Dendritic cell treated with granulocyte-macrophage colony-stimulating factor and Interleukin-4, amounts not matched to agents 40 ng/mL and 50 ng/mL, for 4 days (primary cell): ENCODE measurements at regions of chr12 and their contacts with region 1.

Region 1: GRCh38 chr12:14239350-14239934 is 126.0 kb upstream of the ATF7IP start:
- H3K4me3 Mint-ChIP-seq: peak overlapping the region; percentile 72
- H3K27ac Mint-ChIP-seq: peak overlapping the region; percentile 92
- H3K4me1 Mint-ChIP-seq: peaks cover 28% of the 10 kb centered on the region
- H3K27me3 Mint-ChIP-seq: no peaks in the 10 kb centered on the region

Region 2: DNA sequence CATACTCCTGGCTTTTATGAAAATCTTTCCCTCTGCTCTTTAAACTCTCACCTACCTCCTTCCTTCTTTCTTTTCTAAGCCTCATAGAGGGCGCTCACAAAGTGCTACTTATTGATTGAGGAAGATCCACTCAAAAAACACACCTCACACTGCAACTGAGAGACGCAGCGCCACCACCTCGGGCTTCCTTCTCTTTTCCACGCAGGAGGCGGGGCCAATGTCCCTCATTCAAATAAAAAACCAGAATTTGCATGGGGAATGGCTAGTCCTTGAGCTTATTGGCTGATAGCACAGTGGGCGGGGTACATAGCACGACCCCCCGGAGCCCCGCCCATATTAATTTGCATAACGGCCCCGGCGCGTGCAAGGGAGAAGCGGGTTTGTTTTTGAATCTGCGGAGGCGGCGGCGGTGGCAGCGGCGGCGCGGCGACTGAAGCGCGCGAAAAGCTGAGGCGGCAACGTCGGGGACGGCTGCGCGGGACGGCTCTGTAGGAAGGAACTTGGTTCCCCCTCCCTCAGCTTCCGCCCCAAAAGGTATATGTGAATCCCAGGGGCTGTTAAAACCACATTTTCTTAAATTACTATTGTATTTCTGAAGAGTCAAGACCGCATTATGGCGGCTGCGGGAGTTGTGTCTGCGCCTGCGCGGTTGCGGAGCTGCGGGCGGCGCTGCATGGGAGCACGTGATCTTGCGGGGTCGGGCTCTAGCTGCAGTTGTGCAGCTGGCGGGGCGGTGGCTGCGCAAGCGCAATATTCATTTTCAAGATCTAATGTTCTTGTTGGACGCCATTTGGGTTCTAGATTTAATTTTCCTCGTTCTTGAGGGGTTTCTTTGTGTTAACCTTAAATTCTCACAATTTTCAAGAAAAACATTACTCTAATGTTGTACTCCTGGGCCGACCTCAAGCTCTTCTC is 126.1 kb after region 1 on chr12 and contains the start of gene ATF7IP:
- intact Hi-C with region 1: loop called (anchors 5 kb)
- H3K4me3 Mint-ChIP-seq: peak within 1 kb of the TSS; percentile 74
- H3K27ac Mint-ChIP-seq: peak within 1 kb of the TSS; percentile 84
- H3K4me1 Mint-ChIP-seq: peaks cover 6% of the 10 kb centered on the region
- H3K27me3 Mint-ChIP-seq: no peaks in the 10 kb centered on the region

Region 3: DNA sequence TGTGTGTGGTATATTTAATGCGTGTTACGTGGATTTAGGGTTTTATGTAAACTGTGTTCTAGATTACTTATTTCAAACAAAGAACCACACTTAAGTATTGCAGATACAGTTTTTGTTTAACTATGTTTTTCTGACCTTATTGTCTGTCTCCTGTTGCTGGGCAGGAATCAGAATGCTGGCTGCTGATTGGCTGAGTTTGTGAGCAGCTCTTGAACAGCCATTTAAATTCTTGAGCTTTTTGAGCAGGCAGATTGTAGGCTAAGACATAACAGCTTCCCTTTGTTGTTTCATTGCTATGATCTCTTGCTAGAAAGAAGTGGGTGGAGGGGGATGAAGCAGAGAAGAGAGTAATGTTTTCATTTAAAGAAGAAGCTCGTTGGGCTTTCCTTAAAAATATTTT is 178.3 kb after region 1 on chr12:
- intact Hi-C with region 1: loop called (anchors 2 kb)
- H3K4me3 Mint-ChIP-seq: no peak overlapping the region
- H3K27ac Mint-ChIP-seq: no peak overlapping the region
- H3K4me1 Mint-ChIP-seq: peaks cover 8% of the 10 kb centered on the region
- H3K27me3 Mint-ChIP-seq: no peaks in the 10 kb centered on the region

Region 4: GRCh38 chr12:14454098-14454907 is 214.9 kb after region 1 on chr12:
- intact Hi-C with region 1: loop called (anchors 2 kb)
- H3K4me3 Mint-ChIP-seq: no peak overlapping the region
- H3K27ac Mint-ChIP-seq: no peak overlapping the region
- H3K4me1 Mint-ChIP-seq: peaks cover 27% of the 10 kb centered on the region
- H3K27me3 Mint-ChIP-seq: no peaks in the 10 kb centered on the region

Region 5: DNA sequence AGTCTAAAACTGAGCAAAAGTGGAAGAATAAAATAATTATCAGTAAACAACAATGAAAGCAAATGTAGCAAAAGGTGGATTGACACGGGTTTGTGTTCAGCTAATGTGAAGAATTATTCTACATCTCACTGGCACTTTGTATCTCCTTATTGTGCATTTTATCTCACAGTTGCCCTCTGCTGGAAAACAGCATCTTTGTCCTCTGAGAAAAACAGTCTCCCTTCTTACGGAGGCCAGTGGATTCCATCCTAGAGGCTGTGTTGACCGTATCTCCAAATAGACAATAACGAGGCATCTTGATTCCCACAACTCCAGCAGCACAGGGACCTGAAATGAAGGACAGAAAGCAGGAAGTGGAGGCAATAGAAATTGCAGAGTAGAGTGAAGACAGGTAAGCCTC is 379.5 kb after region 1 on chr12:
- intact Hi-C with region 1: loop called (anchors 2 kb)
- H3K4me3 Mint-ChIP-seq: no peak overlapping the region
- H3K27ac Mint-ChIP-seq: no peak overlapping the region
- H3K4me1 Mint-ChIP-seq: peaks cover 34% of the 10 kb centered on the region
- H3K27me3 Mint-ChIP-seq: no peaks in the 10 kb centered on the region

Region 6: DNA sequence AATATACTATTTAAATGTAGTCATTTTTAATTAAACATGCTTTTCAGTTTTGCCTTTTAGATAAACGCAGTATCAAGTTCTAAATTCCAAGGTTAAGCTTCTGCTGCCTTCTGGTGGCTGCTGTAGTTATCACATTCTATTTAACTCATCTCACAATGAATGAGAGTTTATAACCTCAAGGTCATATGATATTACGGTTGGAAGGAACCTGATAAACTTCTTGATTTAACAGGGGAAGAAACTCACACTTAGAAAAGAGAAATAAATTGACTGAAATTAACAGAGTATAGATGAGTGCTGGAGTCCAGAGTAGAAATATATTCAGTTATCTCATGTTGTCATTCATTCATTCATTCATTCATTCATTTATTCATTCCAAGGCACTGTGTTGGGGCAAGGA is 425.1 kb after region 1 on chr12:
- intact Hi-C with region 1: loop called (anchors 2 kb)
- H3K4me3 Mint-ChIP-seq: no peak overlapping the region
- H3K27ac Mint-ChIP-seq: no peak overlapping the region
- H3K4me1 Mint-ChIP-seq: no peaks in the 10 kb centered on the region
- H3K27me3 Mint-ChIP-seq: peaks cover 4% of the 10 kb centered on the region

Region 7: GRCh38 chr12:14716848-14717444 is 477.5 kb after region 1 on chr12:
- intact Hi-C with region 1: loop called (anchors 2 kb)
- H3K4me3 Mint-ChIP-seq: no peak overlapping the region
- H3K27ac Mint-ChIP-seq: no peak overlapping the region
- H3K4me1 Mint-ChIP-seq: no peaks in the 10 kb centered on the region
- H3K27me3 Mint-ChIP-seq: peaks cover 8% of the 10 kb centered on the region